Posterior vena cava (tissue), 2 donors: ENCODE measurements at regions of chr3 and their contacts with region 1.

Region 1: GRCh38 chr3:58179235-58180098 is 31.3 kb downstream of the DNASE1L3 start:
- DNase-seq: peak; percentile 73

Region 2: DNA sequence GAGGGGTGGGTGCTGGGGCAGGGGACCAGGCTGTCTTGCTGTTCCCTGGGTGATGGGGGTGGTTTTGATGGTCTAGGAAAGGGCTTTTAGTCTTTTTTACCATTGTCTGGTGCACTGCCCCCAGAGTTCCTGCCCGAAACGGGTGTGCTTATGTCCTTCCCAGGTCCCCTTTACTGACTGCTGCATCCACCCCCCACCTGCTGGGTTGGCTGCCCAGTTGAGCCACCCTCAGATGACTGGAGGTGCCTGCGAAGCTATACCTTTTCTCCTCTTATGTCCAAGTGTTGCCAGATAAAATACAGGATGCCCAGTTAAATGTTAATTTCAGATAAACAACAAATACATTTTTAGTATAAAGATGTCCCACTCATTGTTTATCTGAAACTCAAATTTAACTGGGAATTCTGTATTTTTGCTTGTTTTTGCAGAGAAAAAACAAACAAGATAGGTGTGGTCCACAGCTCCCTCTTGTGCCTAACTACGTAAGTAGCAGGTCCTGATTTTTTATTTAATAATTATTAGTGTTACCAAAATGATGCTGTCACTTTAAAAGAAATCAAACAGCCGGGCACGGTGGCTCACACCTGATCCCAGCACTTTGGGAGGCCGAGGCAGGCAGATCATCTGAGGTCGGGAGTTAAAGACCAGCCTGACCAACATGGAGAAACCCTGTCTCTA is 120.5 kb after region 1 on chr3:
- intact Hi-C with region 1: loop called in 1 of 2 experiments (anchors 5 kb)
- DNase-seq: no peak